ENCODE measurements at regions of chr18 and their contacts with region 1.

Region 1: DNA sequence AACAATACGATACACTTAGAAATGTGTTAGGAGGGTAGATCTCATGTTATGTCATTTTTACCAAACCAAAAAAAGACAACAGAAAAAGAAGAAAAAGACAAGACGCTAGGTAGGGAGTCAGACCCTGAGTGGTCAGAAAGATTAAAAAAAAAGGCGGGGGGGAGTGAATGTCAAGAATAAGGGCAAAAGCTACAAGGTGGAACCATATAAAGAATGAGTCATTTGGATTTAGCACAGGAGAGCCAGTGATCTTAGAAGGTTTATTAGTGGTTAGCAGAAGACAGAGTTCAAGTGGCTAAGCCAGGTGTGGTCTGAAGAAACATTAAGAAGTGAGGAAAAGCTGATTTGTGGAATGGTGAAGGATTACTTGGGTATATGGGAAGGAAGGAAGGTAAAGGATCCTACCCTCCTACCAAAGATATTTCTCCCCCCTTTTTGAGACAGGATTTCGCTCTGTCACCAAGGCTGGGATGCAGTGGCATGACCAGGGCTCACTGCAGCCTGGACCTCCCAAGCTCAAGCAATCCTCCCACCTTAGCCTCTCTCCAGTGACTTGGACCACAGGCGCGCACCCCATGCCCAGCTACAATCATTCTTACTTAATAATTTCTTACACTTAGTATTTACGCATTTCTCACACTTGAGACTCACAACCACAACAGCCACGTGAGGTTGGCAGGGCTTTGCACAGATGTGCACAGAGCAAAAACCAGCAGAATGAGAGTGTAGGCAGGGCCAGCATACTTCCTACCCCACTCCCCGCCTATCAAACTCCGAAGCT is 2.6 kb downstream of the DSC2 start:
- DNase-seq: peak in 1 of 3 donors; percentile 29
- ATAC-seq: no peak
- H3K4me3 ChIP-seq: peak overlapping the region; percentile 74
- H3K27ac ChIP-seq: no peak overlapping the region
- H3K4me1 ChIP-seq: peaks cover 2% of the 10 kb centered on the region
- H3K27me3 ChIP-seq: no peaks in the 10 kb centered on the region

Region 2: GRCh38 chr18:31512203-31512764 is 412.6 kb after region 1 on chr18:
- intact Hi-C with region 1: loop called in 1 of 4 experiments (anchors 10 kb)
- DNase-seq: no peak
- ATAC-seq: peak; percentile 65 to 75
- H3K4me3 ChIP-seq: no peak overlapping the region
- H3K27ac ChIP-seq: no peak overlapping the region
- H3K4me1 ChIP-seq: peaks cover 6% of the 10 kb centered on the region
- H3K27me3 ChIP-seq: no peaks in the 10 kb centered on the region

Measured in right cardiac atrium (tissue), 5 donors.